Calu3 (cell line): ENCODE measurements at regions of chrX and their contacts with region 1.

Region 1: GRCh38 chrX:140817942-140818341 is 108.4 kb downstream of the LINC00632 start:
- DNase-seq: no peak
- H3K4me3 Mint-ChIP-seq: no peak overlapping the region
- H3K27ac Mint-ChIP-seq: no peak overlapping the region
- H3K4me1 Mint-ChIP-seq: no peaks in the 10 kb centered on the region
- H3K27me3 Mint-ChIP-seq: no peaks in the 10 kb centered on the region
- CTCF ChIP-seq: peak; percentile 13

Region 2: DNA sequence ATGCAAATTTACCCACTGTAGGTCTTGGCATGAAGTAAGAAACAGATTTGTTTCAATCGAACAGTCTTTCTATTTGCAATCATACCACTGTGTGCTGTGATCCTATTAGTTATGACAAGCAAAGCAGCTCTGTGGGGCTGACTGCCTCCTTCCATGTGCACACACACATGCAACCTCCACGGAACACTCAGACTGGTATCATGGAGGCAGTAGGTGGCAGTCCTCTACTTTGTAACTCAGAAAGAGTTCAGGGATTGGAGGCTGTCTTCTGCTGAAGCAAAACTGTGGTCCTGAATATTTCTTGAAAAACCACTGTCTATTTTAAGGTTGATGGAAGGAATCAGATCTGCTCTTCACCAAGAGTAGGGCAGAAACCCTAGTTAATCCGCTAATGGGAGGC is 1425.4 kb before region 1 on chrX:
- CTCF ChIA-PET with region 1: no interaction called
- intact Hi-C with region 1: no loop called
- DNase-seq: no peak
- H3K4me3 Mint-ChIP-seq: no peak overlapping the region
- H3K27ac Mint-ChIP-seq: no peak overlapping the region
- H3K4me1 Mint-ChIP-seq: no peaks in the 10 kb centered on the region
- H3K27me3 Mint-ChIP-seq: no peaks in the 10 kb centered on the region
- CTCF ChIP-seq: no peak

Region 3: GRCh38 chrX:140944710-140945109 is 126.8 kb after region 1 on chrX:
- CTCF ChIA-PET with region 1: no interaction called
- intact Hi-C with region 1: no loop called
- DNase-seq: no peak
- H3K4me3 Mint-ChIP-seq: no peak overlapping the region
- H3K27ac Mint-ChIP-seq: no peak overlapping the region
- H3K4me1 Mint-ChIP-seq: no peaks in the 10 kb centered on the region
- H3K27me3 Mint-ChIP-seq: no peaks in the 10 kb centered on the region
- CTCF ChIP-seq: no peak

Region 4: DNA sequence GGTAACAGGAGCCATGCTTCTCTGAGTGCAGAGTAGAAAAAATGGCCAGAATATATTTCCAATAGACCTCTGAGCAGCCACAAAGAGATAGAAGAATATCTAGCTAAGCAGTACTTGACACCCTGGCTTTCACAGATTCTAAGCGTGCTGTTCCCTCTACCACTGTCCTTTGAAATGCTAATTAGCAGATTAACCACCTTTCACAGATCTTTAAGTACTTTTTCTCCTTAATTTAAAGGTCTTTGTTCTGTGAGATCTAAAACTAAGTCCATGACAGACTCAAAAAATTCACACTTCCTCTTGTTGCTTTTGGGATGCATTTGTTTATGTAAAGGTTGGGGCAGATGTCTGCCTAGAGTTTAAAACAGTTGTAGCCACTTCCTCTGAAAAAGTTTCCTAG is 1415.5 kb after region 1 on chrX:
- CTCF ChIA-PET with region 1: no interaction called
- intact Hi-C with region 1: loop called (anchors 10 kb)
- DNase-seq: no peak
- H3K4me3 Mint-ChIP-seq: no peak overlapping the region
- H3K27ac Mint-ChIP-seq: no peak overlapping the region
- H3K4me1 Mint-ChIP-seq: no peaks in the 10 kb centered on the region
- H3K27me3 Mint-ChIP-seq: no peaks in the 10 kb centered on the region
- CTCF ChIP-seq: no peak